ENCODE measurements at regions of chr22 and their contacts with region 1.

Region 1: GRCh38 chr22:19479357-19480172 is at the start of gene CDC45:
- DNase-seq: peak; percentile 92
- H3K4me3 ChIP-seq: peak within 1 kb of the TSS; percentile 95
- CTCF ChIP-seq: no peak

Region 2: DNA sequence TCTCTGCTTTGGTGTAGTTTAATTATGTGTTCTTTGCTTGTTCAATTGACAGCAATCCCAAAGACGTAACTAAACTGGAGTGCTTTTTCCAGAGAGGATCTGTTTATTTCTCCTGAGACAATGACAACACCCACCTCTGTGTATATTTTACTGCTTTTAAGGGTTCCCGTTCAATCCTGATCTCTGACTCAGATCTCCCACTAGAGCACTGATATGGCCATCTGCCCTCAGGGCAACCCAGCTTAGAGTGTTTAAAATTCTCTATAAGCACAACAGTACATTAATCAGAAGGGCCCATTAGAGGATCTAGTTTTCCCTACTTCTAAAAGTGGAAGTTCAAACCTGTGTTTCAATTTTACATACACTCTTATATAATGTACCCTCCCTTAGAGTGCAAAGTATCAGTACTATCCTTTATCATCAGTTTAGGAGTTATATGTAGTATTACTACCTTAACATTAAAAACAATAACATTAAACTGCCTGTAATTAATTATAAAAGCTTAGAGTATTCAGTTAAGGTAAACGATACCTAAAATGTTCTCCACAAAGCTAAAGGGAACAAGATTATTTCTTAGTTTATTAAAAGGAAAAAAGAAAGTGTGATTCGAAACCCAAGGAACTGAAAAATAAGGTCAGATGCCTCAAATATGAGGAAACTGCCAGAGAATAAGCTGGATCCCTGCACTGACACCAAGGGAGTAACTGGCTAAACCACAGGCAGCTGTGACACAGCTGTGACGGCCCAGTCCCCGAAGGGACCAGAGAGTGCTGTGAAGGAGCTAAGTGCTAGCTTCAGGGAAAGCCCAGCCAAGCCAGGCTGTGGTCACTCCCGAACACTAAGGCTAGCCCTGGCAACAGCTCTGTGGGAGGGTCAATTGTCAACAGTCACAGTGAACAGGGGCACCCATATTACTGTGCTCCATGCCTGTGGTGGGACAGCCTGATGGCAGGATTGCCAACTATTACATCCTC is 15.8 kb before region 1 on chr22:
- CTCF ChIA-PET with region 1: interaction called, 17 read pairs
- POLR2A ChIA-PET with region 1: no interaction called
- DNase-seq: peak; percentile 31
- H3K4me3 ChIP-seq: no peak overlapping the region
- CTCF ChIP-seq: no peak

Region 3: GRCh38 chr22:19503869-19504268 is 24.3 kb after region 1 on chr22:
- CTCF ChIA-PET with region 1: no interaction called
- POLR2A ChIA-PET with region 1: no interaction called
- DNase-seq: no peak
- H3K4me3 ChIP-seq: no peak overlapping the region
- CTCF ChIP-seq: no peak

Measured in AG04449 (cell line).